Activated naive CD4-positive, alpha-beta T cell treated with anti-CD3 and anti-CD28 coated beads for 36 hours (primary cell): ENCODE measurements at regions of chr11 and their contacts with region 1.

Region 1: DNA sequence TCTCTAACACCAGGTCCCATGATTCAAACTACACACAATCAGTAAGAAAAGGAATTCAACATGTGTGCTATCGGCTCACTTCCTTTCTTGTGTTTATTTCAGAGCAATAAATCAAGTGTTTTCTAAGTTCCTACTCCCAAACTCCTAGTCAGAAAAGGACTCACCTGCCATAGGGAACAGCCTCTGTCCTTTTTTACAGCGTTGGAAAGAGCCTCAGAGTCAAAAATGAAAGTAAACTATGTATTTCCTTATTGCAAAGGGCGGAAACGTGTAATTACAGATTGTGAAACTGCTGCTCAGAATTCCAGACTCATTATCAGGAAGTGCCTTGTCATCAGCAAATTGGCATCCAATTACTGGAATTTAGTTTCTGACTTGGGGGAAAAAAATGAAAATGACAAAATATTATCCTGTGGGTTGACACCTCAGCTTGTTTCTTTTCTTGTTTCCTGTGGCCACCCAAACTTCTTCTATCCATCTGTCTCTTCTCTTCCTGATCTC is at the start of gene CASP4:
- DNase-seq: peak; percentile 21
- H3K4me3 Mint-ChIP-seq: peak within 1 kb of the TSS; percentile 86
- H3K27ac Mint-ChIP-seq: peak within 1 kb of the TSS; percentile 91
- H3K4me1 Mint-ChIP-seq: peaks cover 33% of the 10 kb centered on the region
- H3K27me3 Mint-ChIP-seq: no peaks in the 10 kb centered on the region
- total RNA-seq, gene CASP4: 47.9 to 48.7 TPM

Region 2: GRCh38 chr11:104799251-104799650 is 169.2 kb before region 1 on chr11:
- CTCF ChIA-PET with region 1: no interaction called
- intact Hi-C with region 1: loop called (anchors 5 kb)
- DNase-seq: no peak
- H3K4me3 Mint-ChIP-seq: peak overlapping the region; percentile 53
- H3K27ac Mint-ChIP-seq: peak overlapping the region; percentile 68
- H3K4me1 Mint-ChIP-seq: peaks cover 34% of the 10 kb centered on the region
- H3K27me3 Mint-ChIP-seq: no peaks in the 10 kb centered on the region

Region 3: DNA sequence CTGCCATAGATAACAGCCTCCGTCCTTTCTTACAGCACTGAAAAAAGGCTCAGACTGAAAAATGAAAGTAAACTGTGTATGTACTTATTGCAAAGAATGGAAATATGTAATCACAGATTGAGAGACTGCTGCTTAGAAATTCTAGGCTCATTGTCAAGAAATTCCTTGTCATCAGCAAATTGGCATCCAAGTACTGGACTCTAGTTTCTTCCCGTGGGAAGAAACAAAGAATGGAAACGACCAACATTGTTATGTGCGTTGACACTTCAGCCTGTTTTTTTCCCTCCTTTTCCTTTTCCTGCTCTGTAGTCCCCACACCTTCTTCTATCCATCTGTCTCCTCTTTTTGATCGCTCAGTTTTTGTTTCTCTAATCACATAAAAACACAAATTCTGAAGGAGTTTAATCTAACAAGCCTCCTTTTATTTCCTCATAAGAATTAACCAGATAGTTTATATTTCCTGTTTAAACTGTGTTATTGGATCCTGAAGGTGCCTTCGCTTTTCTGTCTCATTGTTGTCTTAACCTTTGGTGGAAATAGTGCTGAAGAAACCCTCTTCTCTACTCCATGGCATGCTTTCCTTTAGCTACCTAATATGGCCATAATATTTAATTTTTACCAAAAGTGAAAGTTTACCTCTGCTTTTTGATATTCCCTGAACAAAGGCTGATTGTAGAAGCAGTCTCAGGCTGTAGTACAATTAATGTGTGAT is 50.1 kb before region 1 on chr11:
- CTCF ChIA-PET with region 1: no interaction called
- intact Hi-C with region 1: loop called (anchors 2 kb)
- DNase-seq: no peak
- H3K4me3 Mint-ChIP-seq: peak overlapping the region; percentile 59
- H3K27ac Mint-ChIP-seq: peak overlapping the region; percentile 78
- H3K4me1 Mint-ChIP-seq: peaks cover 38% of the 10 kb centered on the region
- H3K27me3 Mint-ChIP-seq: no peaks in the 10 kb centered on the region

Region 4: GRCh38 chr11:104956528-104956927 is 11.9 kb before region 1 on chr11:
- CTCF ChIA-PET with region 1: no interaction called
- intact Hi-C with region 1: loop called (anchors 1 kb)
- DNase-seq: no peak
- H3K4me3 Mint-ChIP-seq: no peak overlapping the region
- H3K27ac Mint-ChIP-seq: no peak overlapping the region
- H3K4me1 Mint-ChIP-seq: peaks cover 50% of the 10 kb centered on the region
- H3K27me3 Mint-ChIP-seq: no peaks in the 10 kb centered on the region

Region 5: GRCh38 chr11:105044921-105045524 is 76.6 kb after region 1 on chr11 and contains the start of gene CARD16:
- CTCF ChIA-PET with region 1: no interaction called
- intact Hi-C with region 1: loop called (anchors 2 kb)
- DNase-seq: peak; percentile 64
- H3K4me3 Mint-ChIP-seq: peak within 1 kb of the TSS; percentile 83
- H3K27ac Mint-ChIP-seq: peak within 1 kb of the TSS; percentile 82
- H3K4me1 Mint-ChIP-seq: peaks cover 46% of the 10 kb centered on the region
- H3K27me3 Mint-ChIP-seq: no peaks in the 10 kb centered on the region
- total RNA-seq, gene CARD16: 9.5 to 10.9 TPM